GM10248 (cell line): ENCODE measurements at regions of chr2 and their contacts with region 1.

Region 1: DNA sequence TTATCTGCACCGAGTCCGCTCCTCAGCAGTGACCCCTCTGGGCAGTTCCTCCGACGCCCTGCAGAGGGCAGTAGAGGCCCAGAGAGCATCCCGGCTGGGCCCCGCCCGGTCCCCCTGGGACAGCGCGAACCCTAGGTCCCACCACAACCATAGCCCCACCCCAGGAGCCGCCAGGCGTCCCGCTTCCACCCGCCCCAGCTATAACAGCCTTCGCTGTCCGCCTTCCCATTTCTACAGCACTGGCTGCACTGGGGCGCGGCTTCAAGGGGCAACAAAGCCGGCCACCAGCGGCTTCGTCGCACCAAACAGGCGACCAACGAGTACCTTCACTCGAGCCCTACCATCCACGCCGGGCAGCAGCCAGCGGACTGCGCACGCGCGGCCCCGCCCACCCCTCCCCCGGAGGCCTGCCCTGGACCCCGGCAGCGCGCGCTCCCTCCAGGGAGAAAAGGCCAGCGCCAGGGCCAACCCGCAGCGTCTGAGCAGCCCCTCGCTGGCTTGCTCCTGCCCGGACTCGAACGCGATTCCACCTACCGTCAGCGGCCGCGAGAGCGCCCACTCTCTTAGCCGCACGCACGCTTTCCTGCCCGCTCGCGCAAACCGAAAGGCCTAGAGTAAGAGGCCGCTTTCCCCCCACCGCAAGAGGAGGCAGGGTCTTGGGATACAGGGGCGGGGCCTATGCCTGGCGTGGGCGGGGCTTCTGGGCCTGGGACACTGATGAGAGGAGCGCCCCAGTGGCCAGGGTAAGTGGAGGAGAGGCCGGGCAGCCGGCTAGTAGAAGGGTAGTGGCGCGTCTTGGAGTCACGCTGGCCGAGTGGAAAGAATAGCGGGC is at the start of gene NHEJ1:
- DNase-seq: peak; percentile 97
- CTCF ChIP-seq: peak; percentile 94

Region 2: GRCh38 chr2:218910741-218911140 is 249.7 kb before region 1 on chr2:
- CTCF ChIA-PET with region 1: no interaction called
- POLR2A ChIA-PET with region 1: no interaction called
- DNase-seq: no peak
- CTCF ChIP-seq: no peak

Region 3: GRCh38 chr2:218970894-218971293 is 189.5 kb before region 1 on chr2:
- CTCF ChIA-PET with region 1: no interaction called
- POLR2A ChIA-PET with region 1: no interaction called
- DNase-seq: no peak
- CTCF ChIP-seq: no peak

Region 4: GRCh38 chr2:219149667-219150066 is 10.7 kb before region 1 on chr2:
- CTCF ChIA-PET with region 1: interaction called, 16 read pairs
- POLR2A ChIA-PET with region 1: no interaction called
- DNase-seq: no peak
- CTCF ChIP-seq: no peak

Region 5: GRCh38 chr2:219177552-219178376 is 17.4 kb after region 1 on chr2 and contains the start of gene RETREG2:
- CTCF ChIA-PET with region 1: interaction called, 49 read pairs
- POLR2A ChIA-PET with region 1: no interaction called
- DNase-seq: peak; percentile 98
- CTCF ChIP-seq: peak; percentile 71